ENCODE measurements at regions of chr14 and their contacts with region 1.

Region 1: DNA sequence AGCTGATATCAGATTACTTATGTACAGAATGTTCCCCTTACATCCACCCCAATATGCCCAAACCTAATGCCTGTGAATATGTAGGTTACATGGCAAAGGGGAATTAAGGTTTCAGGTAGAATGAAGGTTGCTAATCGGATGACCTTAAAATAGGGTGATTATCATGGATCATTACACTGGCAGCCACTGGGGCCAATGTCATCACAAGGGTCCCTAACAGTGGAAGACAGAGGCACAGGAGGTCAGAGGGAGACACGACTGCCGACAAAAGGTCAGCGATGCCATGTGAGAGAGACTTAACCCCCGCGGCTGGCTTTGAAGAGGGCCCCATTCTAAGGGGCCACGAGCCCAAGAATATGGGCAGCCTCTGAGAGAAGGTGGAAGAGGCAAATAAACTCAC is 106.8 kb upstream of the EVL start:
- DNase-seq: no peak
- H3K27ac ChIP-seq: no peak overlapping the region
- CTCF ChIP-seq: no peak

Region 2: DNA sequence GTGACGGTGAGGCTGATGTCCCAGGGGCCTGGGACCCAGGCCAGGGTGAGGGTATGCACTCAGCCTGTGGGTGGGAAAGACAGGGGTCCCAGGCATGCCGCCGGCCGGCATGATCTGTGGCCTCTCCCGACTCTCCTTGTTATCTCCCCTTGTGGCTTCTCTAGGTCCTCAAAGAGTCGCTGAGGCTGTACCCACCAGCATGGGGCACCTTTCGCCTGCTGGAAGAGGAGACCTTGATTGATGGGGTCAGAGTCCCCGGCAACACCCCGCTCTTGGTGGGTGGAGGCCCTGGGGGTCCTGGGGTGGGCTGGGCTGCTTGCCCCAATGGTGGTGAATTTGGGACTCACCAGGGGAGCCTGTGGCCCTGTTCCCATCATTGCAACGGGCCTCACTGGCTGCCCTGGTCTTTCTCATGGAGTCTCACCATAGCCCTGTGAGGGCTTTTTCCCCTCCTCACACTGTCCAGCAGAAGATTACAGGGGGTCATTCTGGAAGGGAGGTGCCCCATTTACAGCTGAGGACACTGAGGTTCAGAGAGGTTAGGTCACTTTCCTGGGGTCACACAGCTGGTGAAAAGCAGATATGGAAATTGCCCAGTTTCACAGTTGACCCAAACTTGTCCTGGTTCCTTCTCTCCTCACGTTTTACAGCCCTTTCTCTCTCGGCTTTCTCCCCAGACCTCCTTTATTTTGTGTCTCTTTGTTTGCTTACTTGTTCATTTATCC is 236.4 kb before region 1 on chr14:
- CTCF ChIA-PET with region 1: no interaction called
- POLR2A ChIA-PET with region 1: no interaction called
- DNase-seq: no peak
- H3K27ac ChIP-seq: no peak overlapping the region
- CTCF ChIP-seq: no peak

Region 3: DNA sequence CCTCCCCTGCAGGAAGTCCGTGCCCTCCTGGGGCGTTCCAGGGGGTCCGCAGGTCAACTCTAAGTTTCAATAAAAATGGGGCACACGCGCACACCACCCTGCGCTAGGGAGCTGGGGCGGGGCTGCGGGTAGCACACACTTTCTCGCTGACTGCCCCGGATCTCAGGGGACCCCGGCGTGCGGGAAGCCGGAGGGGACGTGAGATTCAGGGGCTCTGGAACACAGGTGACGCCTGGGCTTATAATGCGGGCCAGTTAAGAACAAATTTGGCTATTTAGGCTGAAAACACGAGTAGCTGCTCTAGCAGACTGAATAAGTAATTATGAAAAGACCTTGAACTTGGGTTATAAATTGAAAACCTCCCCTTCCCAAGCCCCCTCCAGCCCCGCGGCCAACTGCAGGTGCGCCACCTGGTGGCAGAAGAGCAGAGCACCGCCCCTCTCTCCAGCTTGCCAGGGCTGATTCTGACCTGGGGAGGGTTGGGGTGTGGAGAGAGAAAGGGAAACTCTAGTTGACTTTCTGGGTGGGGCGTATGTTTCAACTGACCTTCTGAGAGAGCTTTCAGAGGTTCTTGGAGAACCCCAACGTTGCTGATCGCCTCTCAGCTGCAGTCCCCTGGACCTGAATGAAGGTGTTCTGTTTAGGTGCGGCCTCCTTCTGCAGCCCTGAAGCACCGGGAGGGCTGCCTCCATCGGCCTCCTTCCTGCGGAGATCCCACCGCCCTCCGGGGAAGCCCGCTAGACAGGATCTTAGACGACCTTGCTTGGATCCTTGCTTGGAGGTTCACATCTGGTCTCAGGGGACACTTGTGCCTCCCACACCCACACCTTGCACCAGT is 11.5 kb before region 1 on chr14:
- CTCF ChIA-PET with region 1: interaction called, 10 read pairs
- POLR2A ChIA-PET with region 1: no interaction called
- DNase-seq: peak; percentile 70
- H3K27ac ChIP-seq: no peak overlapping the region
- CTCF ChIP-seq: peak; percentile 77

Region 4: DNA sequence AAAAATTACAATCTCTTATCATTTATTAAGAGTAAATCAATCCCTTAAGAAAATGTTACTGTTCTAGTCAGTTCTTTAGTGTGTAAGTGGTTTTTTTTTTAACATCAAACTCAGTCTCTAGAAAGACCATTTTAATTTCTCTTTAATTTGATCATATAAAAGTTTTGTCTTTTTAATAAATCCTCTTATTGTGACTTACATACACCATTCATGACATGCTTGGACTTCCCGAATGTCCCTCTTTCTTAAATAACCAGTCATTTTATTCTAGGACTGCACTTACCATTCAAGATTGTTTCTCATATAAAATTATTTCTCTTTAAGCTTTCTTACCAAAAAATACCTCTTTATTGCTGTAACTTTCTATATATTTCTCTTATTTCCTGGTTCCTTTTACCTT is 46.0 kb after region 1 on chr14:
- CTCF ChIA-PET with region 1: no interaction called
- POLR2A ChIA-PET with region 1: no interaction called
- DNase-seq: no peak
- H3K27ac ChIP-seq: no peak overlapping the region
- CTCF ChIP-seq: no peak